ENCODE measurements at regions of chr2 and their contacts with region 1.

Region 1: DNA sequence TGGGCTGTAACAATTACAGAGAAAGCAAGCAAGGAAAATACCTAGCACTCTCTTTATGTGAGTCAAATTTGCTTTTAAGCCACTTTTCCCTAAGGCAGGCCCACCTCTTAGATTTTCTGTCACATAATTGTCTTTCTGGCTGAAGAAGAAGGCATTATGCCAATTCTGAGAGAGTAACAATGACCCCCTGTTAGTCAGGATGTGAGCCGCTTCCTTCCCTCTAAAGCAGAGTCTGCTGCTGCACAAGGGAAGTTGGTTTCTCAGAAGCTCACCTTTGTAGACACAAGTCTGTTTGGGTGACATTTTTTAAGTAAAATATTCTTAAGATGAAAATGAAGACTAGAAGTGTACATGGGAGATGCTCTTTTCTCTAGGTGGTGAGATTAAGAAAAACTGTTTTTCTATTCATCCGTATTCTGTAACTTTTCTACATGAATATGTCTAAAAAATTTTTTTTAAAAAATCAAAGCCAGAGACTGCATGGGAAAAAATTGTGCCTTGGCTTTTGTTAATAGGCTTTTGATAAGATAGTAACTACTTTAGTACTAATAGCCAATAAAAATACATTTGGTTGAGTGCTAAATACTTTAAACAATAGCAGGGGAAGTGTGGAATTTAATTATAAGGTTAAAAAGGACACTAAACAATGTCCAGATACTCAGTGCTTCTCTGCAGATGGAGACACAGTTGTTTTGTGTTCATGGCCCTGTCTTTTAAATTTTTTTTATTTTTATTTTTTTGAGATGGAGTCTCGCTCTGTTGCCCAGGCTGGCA is 33.4 kb upstream of the VPS54 start:
- DNase-seq: no peak
- ATAC-seq: no peak
- H3K4me3 ChIP-seq: no peak overlapping the region
- H3K4me3 Mint-ChIP-seq: no peak overlapping the region
- H3K27ac ChIP-seq: no peak overlapping the region
- H3K27ac Mint-ChIP-seq: no peak overlapping the region
- H3K4me1 ChIP-seq: peaks cover 10 to 12% of the 10 kb centered on the region in 2 donors
- H3K4me1 Mint-ChIP-seq: peaks cover 23% of the 10 kb centered on the region
- H3K27me3 ChIP-seq: no peaks in the 10 kb centered on the region
- H3K27me3 Mint-ChIP-seq: no peaks in the 10 kb centered on the region
- CTCF ChIP-seq: no peak

Region 2: GRCh38 chr2:63189026-63189425 is 863.6 kb before region 1 on chr2:
- CTCF ChIA-PET with region 1: no interaction called
- POLR2A ChIA-PET with region 1: no interaction called
- intact Hi-C with region 1: no loop called
- DNase-seq: no peak
- ATAC-seq: no peak
- H3K4me3 ChIP-seq: no peak overlapping the region
- H3K4me3 Mint-ChIP-seq: no peak overlapping the region
- H3K27ac ChIP-seq: no peak overlapping the region
- H3K27ac Mint-ChIP-seq: no peak overlapping the region
- H3K4me1 ChIP-seq: no peaks in the 10 kb centered on the region
- H3K4me1 Mint-ChIP-seq: no peaks in the 10 kb centered on the region
- H3K27me3 ChIP-seq: no peaks in the 10 kb centered on the region
- H3K27me3 Mint-ChIP-seq: no peaks in the 10 kb centered on the region
- CTCF ChIP-seq: no peak

Region 3: GRCh38 chr2:64311948-64312621 is 259.4 kb after region 1 on chr2:
- CTCF ChIA-PET with region 1: interaction called, 28 read pairs
- POLR2A ChIA-PET with region 1: no interaction called
- intact Hi-C with region 1: no loop called
- DNase-seq: no peak
- ATAC-seq: no peak
- H3K4me3 ChIP-seq: no peak overlapping the region
- H3K4me3 Mint-ChIP-seq: no peak overlapping the region
- H3K27ac ChIP-seq: no peak overlapping the region
- H3K27ac Mint-ChIP-seq: no peak overlapping the region
- H3K4me1 ChIP-seq: no peaks in the 10 kb centered on the region
- H3K4me1 Mint-ChIP-seq: no peaks in the 10 kb centered on the region
- H3K27me3 ChIP-seq: no peaks in the 10 kb centered on the region
- H3K27me3 Mint-ChIP-seq: peaks cover 3% of the 10 kb centered on the region
- CTCF ChIP-seq: no peak

Region 4: GRCh38 chr2:64318476-64318748 is 265.8 kb after region 1 on chr2:
- CTCF ChIA-PET with region 1: interaction called, 612 read pairs
- POLR2A ChIA-PET with region 1: no interaction called
- intact Hi-C with region 1: no loop called
- DNase-seq: no peak
- ATAC-seq: no peak
- H3K4me3 ChIP-seq: no peak overlapping the region
- H3K4me3 Mint-ChIP-seq: no peak overlapping the region
- H3K27ac ChIP-seq: no peak overlapping the region
- H3K27ac Mint-ChIP-seq: no peak overlapping the region
- H3K4me1 ChIP-seq: no peaks in the 10 kb centered on the region
- H3K4me1 Mint-ChIP-seq: peaks cover 5% of the 10 kb centered on the region
- H3K27me3 ChIP-seq: no peaks in the 10 kb centered on the region
- H3K27me3 Mint-ChIP-seq: peaks cover 7% of the 10 kb centered on the region
- CTCF ChIP-seq: no peak

Region 5: GRCh38 chr2:64562148-64562784 is 509.6 kb after region 1 on chr2:
- CTCF ChIA-PET with region 1: interaction called, 9 read pairs
- POLR2A ChIA-PET with region 1: no interaction called
- intact Hi-C with region 1: loop called (anchors 1 kb)
- DNase-seq: peak; percentile 67
- ATAC-seq: peak; percentile 51
- H3K4me3 ChIP-seq: no peak overlapping the region
- H3K4me3 Mint-ChIP-seq: no peak overlapping the region
- H3K27ac ChIP-seq: no peak overlapping the region
- H3K27ac Mint-ChIP-seq: peak overlapping the region; percentile 38
- H3K4me1 ChIP-seq: peaks cover 5 to 7% of the 10 kb centered on the region in 2 donors
- H3K4me1 Mint-ChIP-seq: peaks cover 39% of the 10 kb centered on the region
- H3K27me3 ChIP-seq: no peaks in the 10 kb centered on the region
- H3K27me3 Mint-ChIP-seq: no peaks in the 10 kb centered on the region
- CTCF ChIP-seq: peak; percentile 76

Region 6: DNA sequence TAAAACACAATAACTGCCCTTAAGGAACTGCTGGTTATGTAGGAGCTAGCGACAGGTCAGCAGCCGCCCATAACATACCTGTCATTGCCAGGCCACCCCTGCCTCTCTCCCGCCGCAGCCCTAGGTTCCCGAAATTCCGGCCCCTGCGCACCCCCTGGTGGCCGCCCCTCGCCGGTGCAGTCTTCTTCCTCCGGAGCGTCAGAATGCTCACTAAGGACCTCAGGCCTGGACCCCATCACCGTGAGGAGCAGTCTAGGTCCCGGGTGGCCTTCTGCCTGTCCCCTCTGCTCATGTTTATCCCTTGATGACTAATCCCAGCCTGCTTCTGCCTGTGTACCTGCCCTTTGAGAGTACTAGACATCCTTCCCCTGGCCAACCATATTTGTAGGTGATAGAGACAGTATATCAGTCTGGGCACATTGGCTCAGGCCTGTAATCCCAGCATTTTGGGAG is 820.8 kb after region 1 on chr2:
- CTCF ChIA-PET with region 1: interaction called, 3 read pairs
- POLR2A ChIA-PET with region 1: no interaction called
- intact Hi-C with region 1: loop called (anchors 1 kb)
- DNase-seq: peak; percentile 87
- ATAC-seq: peak; percentile 99
- H3K4me3 ChIP-seq: peak overlapping the region in 3 of 5 experiments; percentile 11 to 35 (median 29)
- H3K4me3 Mint-ChIP-seq: peak overlapping the region; percentile 67
- H3K27ac ChIP-seq: no peak overlapping the region
- H3K27ac Mint-ChIP-seq: no peak overlapping the region
- H3K4me1 ChIP-seq: peaks cover 7 to 9% of the 10 kb centered on the region in 2 donors
- H3K4me1 Mint-ChIP-seq: peaks cover 7% of the 10 kb centered on the region
- H3K27me3 ChIP-seq: no peaks in the 10 kb centered on the region
- H3K27me3 Mint-ChIP-seq: no peaks in the 10 kb centered on the region
- CTCF ChIP-seq: peak; percentile 93

Measured in B cell (primary cell).